IMR-90 (cell line): ENCODE measurements at regions of chr11 and their contacts with region 1.

Region 1: GRCh38 chr11:44694443-44694842 is 32.3 kb upstream of the TSPAN18 start:
- DNase-seq: no peak
- ATAC-seq: no peak
- H3K4me3 ChIP-seq: no peak overlapping the region
- H3K27ac ChIP-seq: no peak overlapping the region
- H3K4me1 ChIP-seq: no peaks in the 10 kb centered on the region
- H3K27me3 ChIP-seq: peaks cover 25% of the 10 kb centered on the region
- CTCF ChIP-seq: no peak
- POLR2A ChIP-seq: no peak
- RAD21 ChIP-seq: no peak

Region 2: DNA sequence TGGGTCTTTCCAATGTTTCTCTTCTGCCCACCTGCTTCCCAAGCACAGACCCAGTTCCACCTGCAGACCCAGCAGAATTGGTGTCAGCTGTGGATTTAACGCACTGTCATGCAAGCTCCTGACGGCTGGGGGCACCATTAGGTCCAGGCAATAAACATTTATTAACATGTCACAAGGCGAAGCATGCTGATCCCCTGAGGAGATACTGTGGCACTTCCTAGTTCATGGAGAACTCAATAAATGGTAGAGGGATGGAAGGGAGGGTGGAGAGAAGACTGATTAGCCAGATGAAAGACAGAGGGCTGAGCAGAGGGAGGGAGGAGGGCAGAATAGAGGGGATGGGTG is 36.0 kb before region 1 on chr11:
- CTCF ChIA-PET with region 1: no interaction called
- POLR2A ChIA-PET with region 1: interaction called, 12 read pairs
- dilution Hi-C with region 1: no loop called
- in situ Hi-C with region 1: no loop called
- intact Hi-C with region 1: no loop called
- DNase-seq: peak; percentile 13
- ATAC-seq: peak; percentile 48; the same call in 1 of the 2 replicates
- H3K4me3 ChIP-seq: no peak overlapping the region
- H3K27ac ChIP-seq: no peak overlapping the region
- H3K4me1 ChIP-seq: no peaks in the 10 kb centered on the region
- H3K27me3 ChIP-seq: peaks cover 27% of the 10 kb centered on the region
- CTCF ChIP-seq: peak; percentile 38; the same call in 1 of the 2 replicates
- POLR2A ChIP-seq: no peak
- RAD21 ChIP-seq: peak; percentile 33; the same call in 1 of the 2 replicates

Region 3: GRCh38 chr11:44875037-44875436 is 180.6 kb after region 1 on chr11:
- CTCF ChIA-PET with region 1: interaction called, 11 read pairs
- POLR2A ChIA-PET with region 1: no interaction called
- dilution Hi-C with region 1: no loop called
- in situ Hi-C with region 1: no loop called
- intact Hi-C with region 1: no loop called
- DNase-seq: no peak
- ATAC-seq: no peak
- H3K4me3 ChIP-seq: no peak overlapping the region
- H3K27ac ChIP-seq: no peak overlapping the region
- H3K4me1 ChIP-seq: peaks cover 4% of the 10 kb centered on the region
- H3K27me3 ChIP-seq: peaks cover 31% of the 10 kb centered on the region
- CTCF ChIP-seq: no peak
- POLR2A ChIP-seq: no peak
- RAD21 ChIP-seq: no peak

Region 4: GRCh38 chr11:44899959-44900358 is 205.5 kb after region 1 on chr11:
- CTCF ChIA-PET with region 1: no interaction called
- POLR2A ChIA-PET with region 1: no interaction called
- dilution Hi-C with region 1: no loop called
- in situ Hi-C with region 1: no loop called
- intact Hi-C with region 1: no loop called
- DNase-seq: peak; percentile 71
- ATAC-seq: peak; percentile 61; the same call in 1 of the 2 replicates
- H3K4me3 ChIP-seq: no peak overlapping the region
- H3K27ac ChIP-seq: no peak overlapping the region
- H3K4me1 ChIP-seq: no peaks in the 10 kb centered on the region
- H3K27me3 ChIP-seq: peaks cover 29% of the 10 kb centered on the region
- CTCF ChIP-seq: no peak
- POLR2A ChIP-seq: no peak
- RAD21 ChIP-seq: no peak